Right ventricle myocardium superior (tissue), 1 donor: ENCODE measurements at regions of chr6 and their contacts with region 1.

Region 1: DNA sequence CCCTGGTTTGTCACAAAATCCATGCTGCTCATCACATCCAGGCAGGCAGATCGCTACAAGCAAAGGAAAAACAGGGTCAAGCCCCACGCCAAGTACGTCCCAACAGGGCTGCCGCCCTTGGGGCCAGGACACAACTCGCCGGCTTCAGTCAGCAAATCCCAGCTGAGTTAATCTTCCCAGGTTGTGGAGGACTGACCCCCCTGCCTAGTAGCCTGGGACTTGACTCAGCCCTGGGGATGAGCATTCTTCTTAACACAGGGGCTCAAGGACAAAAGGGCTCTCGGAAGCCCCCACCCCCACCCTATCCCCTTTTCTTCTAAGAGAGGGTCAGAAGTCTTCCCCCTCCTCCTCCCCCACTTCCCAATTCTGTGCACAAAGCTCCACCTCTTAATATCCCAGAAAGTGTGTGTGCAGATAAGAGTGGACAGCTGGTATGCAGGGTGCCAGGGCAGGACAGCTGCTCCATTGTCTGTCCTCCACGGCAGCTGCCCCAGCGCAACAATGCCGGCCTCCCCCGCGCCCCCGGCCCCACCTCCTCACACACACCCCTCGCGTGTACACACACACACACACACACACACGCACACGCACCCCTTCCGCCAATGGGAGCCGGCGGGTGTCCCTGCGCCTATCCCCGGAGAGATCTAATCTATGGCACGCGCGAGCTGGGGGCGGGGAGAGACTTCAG is 4.5 kb downstream of the DLL1 start:
- DNase-seq: peak; percentile 74
- ATAC-seq: peak; percentile 30

Region 2: DNA sequence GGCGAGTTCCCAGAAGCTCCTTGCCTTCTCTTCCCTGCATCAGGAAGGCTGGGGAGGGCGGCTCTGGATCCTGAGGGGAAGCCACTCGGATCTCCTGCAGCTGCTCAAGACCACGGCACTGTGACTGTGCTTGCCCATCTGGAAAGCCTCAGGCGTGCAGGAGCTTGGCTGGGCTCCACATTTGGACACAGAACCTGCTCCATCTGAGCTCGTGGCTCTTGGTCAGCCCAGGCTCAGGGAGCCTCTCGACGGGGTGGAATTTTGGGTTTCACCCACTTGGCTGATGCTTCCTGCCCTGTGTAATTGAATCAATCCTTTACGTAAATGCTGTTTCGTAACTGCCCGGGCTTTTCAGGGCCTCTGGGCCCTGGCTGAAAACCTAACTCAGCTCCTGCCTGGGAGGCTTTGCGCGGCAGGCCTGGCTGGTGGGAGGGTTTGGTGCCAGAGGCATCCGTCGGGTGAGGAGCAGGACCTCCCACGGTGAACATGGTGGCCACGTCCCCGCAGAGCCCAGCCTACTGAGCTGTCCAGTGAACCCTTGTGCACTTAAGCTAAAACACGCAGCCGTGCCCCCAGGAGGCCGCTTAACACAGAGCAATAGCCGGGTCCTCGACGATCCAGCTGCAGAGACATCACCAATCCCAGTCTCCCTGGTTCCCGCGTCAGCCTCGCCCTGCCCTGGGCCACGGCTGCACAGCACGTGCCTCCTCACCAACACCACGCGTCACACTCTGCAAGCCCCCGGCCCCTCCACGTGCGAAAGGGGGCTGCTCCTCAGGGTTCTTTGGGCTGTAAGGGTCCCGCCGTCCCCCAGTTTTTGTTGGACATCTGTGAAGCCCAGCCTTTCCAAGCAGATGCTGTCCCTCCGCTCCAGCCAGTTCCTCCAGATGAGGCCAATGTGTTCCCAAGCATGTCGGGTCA is 236.5 kb before region 1 on chr6:
- intact Hi-C with region 1: loop called (anchors 5 kb)
- DNase-seq: peak; percentile 92
- ATAC-seq: peak; percentile 90